Activated CD4-positive, alpha-beta memory T cell treated with anti-CD3 and anti-CD28 coated beads for 36 hours (primary cell): ENCODE measurements at regions of chr4 and their contacts with region 1.

Region 1: GRCh38 chr4:122764821-122765215 is 32.3 kb downstream of the BBS12 start:
- DNase-seq: no peak
- H3K4me3 Mint-ChIP-seq: no peak overlapping the region
- H3K27ac Mint-ChIP-seq: peak overlapping the region; percentile 3
- H3K4me1 Mint-ChIP-seq: peaks cover 18% of the 10 kb centered on the region
- H3K27me3 Mint-ChIP-seq: no peaks in the 10 kb centered on the region

Region 2: DNA sequence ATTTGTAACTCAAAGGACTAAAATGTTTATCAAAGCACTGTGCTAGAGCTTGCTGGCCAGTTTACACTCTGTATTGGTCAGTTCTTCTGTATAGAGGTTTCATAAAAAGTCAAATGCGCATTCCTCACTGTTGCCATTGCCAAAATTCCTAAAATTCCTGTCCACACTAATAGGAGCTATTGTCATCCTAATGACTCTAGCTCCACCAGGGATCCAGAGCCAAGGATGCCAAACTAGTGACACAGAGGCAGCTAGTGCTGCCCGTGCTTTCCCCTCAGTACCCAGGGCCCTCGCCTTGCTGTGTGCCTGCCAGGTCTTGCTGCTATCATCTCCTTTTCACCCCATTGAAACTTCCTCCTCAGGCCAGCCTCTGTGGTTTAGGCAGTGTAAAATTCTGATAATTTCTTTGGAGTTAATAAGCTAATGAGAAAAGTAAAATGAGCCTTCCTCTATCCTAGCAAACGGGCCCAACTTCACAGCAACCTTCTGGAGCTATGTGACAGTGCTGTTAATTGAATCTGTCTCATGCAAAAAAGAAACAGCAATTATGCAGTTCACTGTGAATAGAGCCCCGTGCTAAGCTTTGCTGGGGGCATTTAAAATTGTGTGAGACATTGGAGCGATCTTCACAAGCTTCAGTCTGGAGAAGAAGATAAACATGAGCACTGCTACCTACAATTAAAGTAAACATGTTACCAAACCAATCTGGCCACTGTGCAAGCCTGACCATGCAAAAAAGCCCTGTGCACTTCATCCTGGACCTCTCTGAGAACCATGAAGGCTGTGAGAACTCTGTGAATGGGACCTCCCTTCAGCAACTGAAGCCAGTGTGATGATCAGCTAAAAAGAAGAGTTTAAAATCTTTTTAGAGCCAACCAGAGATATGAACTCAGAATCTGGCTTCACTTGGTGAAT is 18.7 kb after region 1 on chr4:
- CTCF ChIA-PET with region 1: no interaction called
- POLR2A ChIA-PET with region 1: no interaction called
- intact Hi-C with region 1: loop called (anchors 1 kb)
- DNase-seq: no peak
- H3K4me3 Mint-ChIP-seq: no peak overlapping the region
- H3K27ac Mint-ChIP-seq: no peak overlapping the region
- H3K4me1 Mint-ChIP-seq: peaks cover 16% of the 10 kb centered on the region
- H3K27me3 Mint-ChIP-seq: no peaks in the 10 kb centered on the region

Region 3: GRCh38 chr4:123158576-123158975 is 393.8 kb after region 1 on chr4:
- CTCF ChIA-PET with region 1: no interaction called
- POLR2A ChIA-PET with region 1: no interaction called
- intact Hi-C with region 1: no loop called
- DNase-seq: no peak
- H3K4me3 Mint-ChIP-seq: no peak overlapping the region
- H3K27ac Mint-ChIP-seq: no peak overlapping the region
- H3K4me1 Mint-ChIP-seq: no peaks in the 10 kb centered on the region
- H3K27me3 Mint-ChIP-seq: no peaks in the 10 kb centered on the region